ENCODE measurements at regions of chr6 and their contacts with region 1.

Region 1: GRCh38 chr6:143060354-143060805 is 309 bp upstream of the AIG1 start:
- DNase-seq: peak; percentile 77
- H3K4me3 Mint-ChIP-seq: peak overlapping the region; percentile 81
- H3K27ac Mint-ChIP-seq: peak overlapping the region; percentile 90
- H3K4me1 Mint-ChIP-seq: peaks cover 28% of the 10 kb centered on the region
- H3K27me3 Mint-ChIP-seq: no peaks in the 10 kb centered on the region

Region 2: GRCh38 chr6:143038833-143039232 is 21.5 kb before region 1 on chr6:
- CTCF ChIA-PET with region 1: no interaction called
- intact Hi-C with region 1: loop called (anchors 1 kb)
- DNase-seq: no peak
- H3K4me3 Mint-ChIP-seq: no peak overlapping the region
- H3K27ac Mint-ChIP-seq: no peak overlapping the region
- H3K4me1 Mint-ChIP-seq: peaks cover 13% of the 10 kb centered on the region
- H3K27me3 Mint-ChIP-seq: no peaks in the 10 kb centered on the region

Region 3: DNA sequence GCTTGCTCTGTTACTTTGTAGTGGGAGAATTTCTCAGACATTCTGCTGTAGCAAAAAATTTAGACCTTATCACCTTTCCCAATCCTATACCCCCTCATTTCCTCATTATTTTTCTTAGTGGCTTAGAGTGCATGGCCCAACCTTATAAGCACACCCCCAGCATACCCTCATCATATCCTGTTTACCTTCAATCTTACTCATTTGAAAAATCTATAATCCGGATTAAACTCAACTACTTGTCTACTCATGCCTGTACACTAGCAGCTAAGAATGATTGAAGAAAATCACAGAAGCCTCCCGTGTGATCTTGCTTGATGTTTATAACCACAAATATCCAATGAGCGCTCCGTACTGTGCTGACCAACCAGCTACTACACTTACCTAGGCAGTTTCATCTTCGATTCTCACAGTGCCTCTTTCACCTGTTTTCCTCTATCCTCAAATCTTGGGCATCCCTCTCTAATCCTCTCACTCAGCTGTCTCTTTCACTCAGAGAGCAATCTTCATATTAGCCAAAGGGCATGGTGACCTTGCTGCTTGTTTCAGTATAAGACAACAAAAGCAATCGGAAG is 36.9 kb after region 1 on chr6:
- CTCF ChIA-PET with region 1: no interaction called
- intact Hi-C with region 1: loop called (anchors 1 kb)
- DNase-seq: peak; percentile 18
- H3K4me3 Mint-ChIP-seq: no peak overlapping the region
- H3K27ac Mint-ChIP-seq: no peak overlapping the region
- H3K4me1 Mint-ChIP-seq: peaks cover 6% of the 10 kb centered on the region
- H3K27me3 Mint-ChIP-seq: no peaks in the 10 kb centered on the region

Region 4: DNA sequence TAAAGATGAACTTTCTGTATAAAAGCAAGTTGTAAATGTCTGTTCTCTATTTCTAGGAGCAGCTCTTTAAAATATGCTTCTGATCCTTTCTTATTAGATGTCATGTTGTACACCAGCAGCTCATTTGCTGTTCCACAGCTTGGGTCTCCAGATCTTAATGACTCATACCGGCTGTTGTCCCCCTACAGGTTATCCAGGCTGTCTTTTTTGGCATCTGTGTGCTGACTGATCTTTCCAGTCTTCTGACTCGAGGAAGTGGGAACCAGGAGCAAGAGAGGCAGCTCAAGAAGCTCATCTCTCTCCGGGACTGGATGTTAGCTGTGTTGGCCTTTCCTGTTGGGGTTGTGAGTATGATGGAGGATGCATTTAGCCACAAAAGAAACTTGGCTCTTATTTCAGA is 76.3 kb after region 1 on chr6:
- CTCF ChIA-PET with region 1: no interaction called
- intact Hi-C with region 1: loop called (anchors 1 kb)
- DNase-seq: no peak
- H3K4me3 Mint-ChIP-seq: no peak overlapping the region
- H3K27ac Mint-ChIP-seq: peak overlapping the region; percentile 62
- H3K4me1 Mint-ChIP-seq: peaks cover 51% of the 10 kb centered on the region
- H3K27me3 Mint-ChIP-seq: no peaks in the 10 kb centered on the region

Region 5: GRCh38 chr6:143427109-143427817 is 366.9 kb after region 1 on chr6:
- CTCF ChIA-PET with region 1: interaction called, 5 read pairs
- intact Hi-C with region 1: loop called (anchors 1 kb)
- DNase-seq: peak; percentile 76
- H3K4me3 Mint-ChIP-seq: no peak overlapping the region
- H3K27ac Mint-ChIP-seq: no peak overlapping the region
- H3K4me1 Mint-ChIP-seq: peaks cover 14% of the 10 kb centered on the region
- H3K27me3 Mint-ChIP-seq: no peaks in the 10 kb centered on the region

Region 6: DNA sequence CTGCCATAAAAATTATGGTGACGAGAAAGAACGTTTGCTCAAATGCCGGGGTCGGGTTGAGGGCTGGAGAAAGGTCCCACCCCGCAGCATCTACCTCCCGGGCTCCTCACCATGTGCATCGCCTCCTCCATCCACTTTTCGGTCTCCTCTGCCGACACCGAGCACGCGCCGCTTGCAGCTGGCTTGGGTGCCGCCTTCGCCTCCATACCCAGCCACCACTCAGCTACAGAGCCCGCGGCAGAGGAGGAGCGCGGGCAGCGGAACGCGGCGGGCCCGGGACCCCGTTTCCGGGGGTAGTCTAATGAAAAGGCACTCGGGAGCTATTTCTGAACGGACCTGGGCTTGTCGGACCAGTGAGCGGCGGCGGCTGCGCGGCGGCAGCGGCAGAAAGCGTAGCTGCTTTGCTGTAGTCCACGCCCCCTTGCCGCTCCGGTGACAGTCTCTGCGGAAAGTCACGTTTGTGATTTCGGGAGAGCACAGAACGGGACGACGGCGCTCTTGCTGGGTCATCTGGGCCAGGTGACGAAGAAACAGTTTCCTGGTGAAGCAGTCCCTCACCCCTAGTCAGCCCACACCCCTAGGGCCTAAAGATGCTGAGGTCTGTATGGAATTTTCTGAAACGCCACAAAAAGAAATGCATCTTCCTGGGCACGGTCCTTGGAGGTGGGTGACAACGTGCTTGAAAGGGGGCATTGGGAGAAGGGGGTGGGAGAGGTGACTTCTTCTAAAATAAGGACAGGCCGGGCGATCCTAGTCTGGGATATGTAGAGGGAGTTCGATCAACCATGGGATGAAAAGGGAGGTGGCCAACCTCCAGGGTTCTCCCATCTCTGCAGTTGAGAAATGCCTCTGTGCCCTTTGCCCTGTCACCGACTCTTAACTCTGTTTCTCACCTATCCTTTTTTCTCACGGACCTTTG is 390.3 kb after region 1 on chr6 and contains the starts of genes ADAT2 and PEX3:
- CTCF ChIA-PET with region 1: no interaction called
- intact Hi-C with region 1: loop called (anchors 2 kb)
- DNase-seq: peak; percentile 96
- H3K4me3 Mint-ChIP-seq: peak within 1 kb of the TSS; percentile 100
- H3K27ac Mint-ChIP-seq: peak within 1 kb of the TSS; percentile 97
- H3K4me1 Mint-ChIP-seq: peaks cover 50% of the 10 kb centered on the region
- H3K27me3 Mint-ChIP-seq: no peaks in the 10 kb centered on the region
- total RNA-seq, gene ADAT2: 36.8 to 39.5 TPM
- total RNA-seq, gene PEX3: 10.8 to 11.9 TPM

Measured in activated naive CD4-positive, alpha-beta T cell treated with anti-CD3 and anti-CD28 coated beads for 36 hours (primary cell).